ENCODE measurements at regions of chr5 and their contacts with region 1.

Region 1: GRCh38 chr5:179623003-179623880 is at the start of gene HNRNPH1:
- DNase-seq: peak; percentile 95 to 99 (median 99)
- ATAC-seq: peak; percentile 85
- H3K4me3 ChIP-seq: peak within 1 kb of the TSS; percentile 97
- H3K4me3 Mint-ChIP-seq: peak within 1 kb of the TSS; percentile 82 to 99 (median 98)
- H3K27ac ChIP-seq: peak within 1 kb of the TSS; percentile 98
- H3K27ac Mint-ChIP-seq: peak within 1 kb of the TSS; percentile 99 to 100 (median 99)
- H3K4me1 ChIP-seq: peaks cover 45 to 47% of the 10 kb centered on the region in 2 donors
- H3K4me1 Mint-ChIP-seq: peaks cover 35 to 56% (median 44%) of the 10 kb centered on the region in 7 donors
- H3K27me3 ChIP-seq: no peaks in the 10 kb centered on the region
- H3K27me3 Mint-ChIP-seq: peaks cover 0 to 8% (median 0%) of the 10 kb centered on the region in 5 donors
- total RNA-seq, gene HNRNPH1: 1,010 to 2,239 (median 1,692) TPM

Region 2: GRCh38 chr5:179060116-179061008 is 562.9 kb before region 1 on chr5 and contains the start of gene ZNF354C:
- CTCF ChIA-PET with region 1: no interaction called
- POLR2A ChIA-PET with region 1: interaction called, 3 read pairs
- intact Hi-C with region 1: loop called in 1 of 2 experiments (anchors 1 kb)
- DNase-seq: peak; percentile 77 to 87 (median 82)
- ATAC-seq: peak; percentile 98
- H3K4me3 ChIP-seq: peak within 1 kb of the TSS; percentile 73
- H3K4me3 Mint-ChIP-seq: peak within 1 kb of the TSS; percentile 89 to 99 (median 94)
- H3K27ac ChIP-seq: peak within 1 kb of the TSS; percentile 79
- H3K27ac Mint-ChIP-seq: peak within 1 kb of the TSS; percentile 82 to 96 (median 92)
- H3K4me1 ChIP-seq: peaks cover 0 to 9% of the 10 kb centered on the region in 2 donors
- H3K4me1 Mint-ChIP-seq: peaks cover 16 to 43% (median 32%) of the 10 kb centered on the region in 7 donors
- H3K27me3 ChIP-seq: no peaks in the 10 kb centered on the region
- H3K27me3 Mint-ChIP-seq: peaks cover 0 to 9% (median 5%) of the 10 kb centered on the region in 5 donors
- total RNA-seq, gene ZNF354C: 3.8 to 12.3 (median 5.2) TPM

Region 3: GRCh38 chr5:179608131-179608581 is 15.1 kb before region 1 on chr5:
- CTCF ChIA-PET with region 1: interaction called, 5 read pairs
- POLR2A ChIA-PET with region 1: interaction called, 135 read pairs
- intact Hi-C with region 1: loop called (anchors 1 kb)
- DNase-seq: peak in 8 of 9 donors; percentile 35 to 73 (median 58)
- ATAC-seq: peak; percentile 68
- H3K4me3 ChIP-seq: no peak overlapping the region
- H3K4me3 Mint-ChIP-seq: peak overlapping the region in 8 of 10 donors; percentile 39 to 68 (median 60)
- H3K27ac ChIP-seq: peak overlapping the region; percentile 23
- H3K27ac Mint-ChIP-seq: peak overlapping the region; percentile 16 to 82 (median 72)
- H3K4me1 ChIP-seq: peaks cover 8 to 16% of the 10 kb centered on the region in 2 donors
- H3K4me1 Mint-ChIP-seq: peaks cover 27 to 59% (median 45%) of the 10 kb centered on the region in 7 donors
- H3K27me3 ChIP-seq: no peaks in the 10 kb centered on the region
- H3K27me3 Mint-ChIP-seq: no peaks in the 10 kb centered on the region

Region 4: DNA sequence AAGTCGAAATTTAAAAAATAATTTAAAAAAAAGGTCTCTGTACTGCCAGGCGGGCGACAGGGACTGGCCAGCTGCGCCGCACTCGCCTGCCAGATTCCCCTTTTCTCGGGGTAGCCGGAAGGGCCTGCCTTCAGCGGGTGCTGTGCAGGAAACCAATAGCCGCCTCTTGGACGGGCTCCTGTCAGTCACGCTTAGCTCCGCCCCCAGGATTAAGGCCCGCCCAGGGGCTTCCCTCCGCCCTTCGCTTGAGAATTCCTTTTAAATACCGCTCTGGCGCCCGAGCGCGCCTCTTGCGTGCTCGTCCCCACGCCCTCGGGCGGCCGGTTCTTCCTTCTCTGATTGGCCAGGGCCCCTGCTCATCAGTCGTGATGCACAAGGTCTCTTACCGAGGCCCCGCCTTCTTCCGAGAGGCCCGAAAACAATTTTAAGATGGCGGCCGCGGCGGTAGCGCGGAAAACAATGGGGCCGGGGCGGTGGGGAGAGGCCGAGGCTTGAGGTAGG is 109.2 kb after region 1 on chr5 and contains the start of gene MAML1:
- CTCF ChIA-PET with region 1: no interaction called
- POLR2A ChIA-PET with region 1: interaction called, 45 read pairs
- intact Hi-C with region 1: loop called (anchors 1 kb)
- DNase-seq: peak; percentile 95 to 100 (median 99)
- ATAC-seq: peak; percentile 97
- H3K4me3 ChIP-seq: peak within 1 kb of the TSS; percentile 70
- H3K4me3 Mint-ChIP-seq: peak within 1 kb of the TSS; percentile 91 to 96 (median 94)
- H3K27ac ChIP-seq: peak within 1 kb of the TSS; percentile 100
- H3K27ac Mint-ChIP-seq: peak within 1 kb of the TSS; percentile 84 to 99 (median 95)
- H3K4me1 ChIP-seq: peaks cover 25 to 35% of the 10 kb centered on the region in 2 donors
- H3K4me1 Mint-ChIP-seq: peaks cover 21 to 52% (median 38%) of the 10 kb centered on the region in 7 donors
- H3K27me3 ChIP-seq: no peaks in the 10 kb centered on the region
- H3K27me3 Mint-ChIP-seq: no peaks in the 10 kb centered on the region
- total RNA-seq, gene MAML1: 26.4 to 51.2 (median 35.5) TPM

Region 5: DNA sequence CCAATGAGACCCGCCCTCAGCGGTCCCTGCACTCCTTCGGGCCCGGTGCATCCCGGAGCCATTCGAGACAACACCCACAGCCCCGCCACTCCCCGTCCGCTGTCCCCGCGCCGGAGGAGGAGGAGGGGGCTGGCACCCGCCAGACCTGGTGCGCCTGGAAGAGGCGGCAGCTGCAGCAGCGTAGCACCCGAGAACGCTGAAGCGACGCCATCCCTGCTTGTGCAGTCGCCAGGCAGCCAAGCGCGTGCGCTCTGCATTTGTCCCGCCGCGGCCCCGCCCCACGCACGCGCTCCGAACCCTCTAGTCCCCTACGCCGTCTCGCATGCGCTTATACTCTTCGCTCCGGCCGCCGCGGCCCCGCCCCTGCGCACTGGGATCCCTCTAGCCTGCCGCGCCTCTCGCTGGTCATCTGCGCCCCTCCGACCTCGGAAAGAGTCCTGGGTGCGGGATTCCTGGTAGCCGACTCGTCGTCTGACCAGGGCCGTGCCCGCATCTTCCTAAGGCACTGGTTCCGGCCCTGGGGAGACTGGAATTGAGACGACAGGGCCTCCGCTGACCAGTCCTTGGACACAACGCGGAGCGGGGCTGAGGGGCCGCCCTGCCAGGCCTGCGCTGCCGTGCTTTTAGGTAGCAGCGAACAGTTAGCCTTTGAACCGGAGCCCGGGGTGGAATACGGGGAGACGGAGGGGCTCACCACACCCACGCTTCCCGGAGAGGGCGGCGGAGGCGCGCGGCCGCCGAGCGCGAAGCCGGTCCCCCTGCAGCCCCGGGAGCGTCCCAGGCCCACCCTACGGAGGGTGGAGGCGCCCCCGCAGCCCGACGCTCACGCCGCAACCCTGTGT is 235.6 kb after region 1 on chr5 and contains the start of gene MRNIP:
- CTCF ChIA-PET with region 1: interaction called, 3 read pairs
- POLR2A ChIA-PET with region 1: interaction called, 6 read pairs
- intact Hi-C with region 1: loop called in 1 of 2 experiments (anchors 1 kb)
- DNase-seq: peak; percentile 75 to 94 (median 85)
- ATAC-seq: peak; percentile 98
- H3K4me3 ChIP-seq: peak within 1 kb of the TSS; percentile 91
- H3K4me3 Mint-ChIP-seq: peak within 1 kb of the TSS; percentile 89 to 99 (median 96)
- H3K27ac ChIP-seq: peak within 1 kb of the TSS; percentile 77
- H3K27ac Mint-ChIP-seq: peak within 1 kb of the TSS; percentile 86 to 95 (median 88)
- H3K4me1 ChIP-seq: peaks cover 5 to 12% of the 10 kb centered on the region in 2 donors
- H3K4me1 Mint-ChIP-seq: peaks cover 8 to 35% (median 26%) of the 10 kb centered on the region in 7 donors
- H3K27me3 ChIP-seq: no peaks in the 10 kb centered on the region
- H3K27me3 Mint-ChIP-seq: no peaks in the 10 kb centered on the region
- total RNA-seq, gene MRNIP: 27.9 to 133 (median 43.3) TPM

Region 6: DNA sequence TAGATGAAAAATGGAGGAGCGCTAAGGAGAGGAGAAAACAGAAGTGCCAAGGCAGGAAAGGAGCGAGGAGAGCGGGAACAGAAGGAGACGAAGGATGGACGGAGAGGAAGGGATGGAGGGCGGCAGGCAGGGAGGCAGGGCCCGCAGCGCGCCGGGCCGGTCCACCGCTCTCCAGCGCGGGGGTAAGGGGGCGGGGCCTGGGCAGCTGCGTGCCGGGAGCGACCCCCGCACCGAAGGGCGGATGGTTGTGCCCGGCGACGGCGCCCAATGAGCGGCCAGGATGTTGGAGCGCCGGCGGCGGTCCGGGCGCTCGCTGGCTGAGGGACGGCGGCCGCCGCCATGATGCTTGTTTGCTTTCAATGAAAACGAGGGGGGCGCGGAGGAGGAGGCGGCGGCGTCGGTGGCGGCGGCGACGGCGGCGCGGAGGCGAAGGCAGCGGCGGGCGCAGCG is 870.8 kb after region 1 on chr5 and contains the start of gene CNOT6:
- CTCF ChIA-PET with region 1: no interaction called
- POLR2A ChIA-PET with region 1: no interaction called
- intact Hi-C with region 1: loop called in 1 of 2 experiments (anchors 5 kb)
- DNase-seq: peak; percentile 91 to 98 (median 95)
- ATAC-seq: peak; percentile 98
- H3K4me3 ChIP-seq: peak within 1 kb of the TSS; percentile 83
- H3K4me3 Mint-ChIP-seq: peak within 1 kb of the TSS; percentile 85 to 99 (median 96)
- H3K27ac ChIP-seq: peak within 1 kb of the TSS; percentile 98
- H3K27ac Mint-ChIP-seq: peak within 1 kb of the TSS; percentile 84 to 98 (median 95)
- H3K4me1 ChIP-seq: peaks cover 10 to 27% of the 10 kb centered on the region in 2 donors
- H3K4me1 Mint-ChIP-seq: peaks cover 29 to 42% (median 35%) of the 10 kb centered on the region in 7 donors
- H3K27me3 ChIP-seq: no peaks in the 10 kb centered on the region
- H3K27me3 Mint-ChIP-seq: no peaks in the 10 kb centered on the region
- total RNA-seq, gene CNOT6: 22.8 to 41.9 (median 30.0) TPM